ENCODE measurements at regions of chr10 and their contacts with region 1.

Region 1: DNA sequence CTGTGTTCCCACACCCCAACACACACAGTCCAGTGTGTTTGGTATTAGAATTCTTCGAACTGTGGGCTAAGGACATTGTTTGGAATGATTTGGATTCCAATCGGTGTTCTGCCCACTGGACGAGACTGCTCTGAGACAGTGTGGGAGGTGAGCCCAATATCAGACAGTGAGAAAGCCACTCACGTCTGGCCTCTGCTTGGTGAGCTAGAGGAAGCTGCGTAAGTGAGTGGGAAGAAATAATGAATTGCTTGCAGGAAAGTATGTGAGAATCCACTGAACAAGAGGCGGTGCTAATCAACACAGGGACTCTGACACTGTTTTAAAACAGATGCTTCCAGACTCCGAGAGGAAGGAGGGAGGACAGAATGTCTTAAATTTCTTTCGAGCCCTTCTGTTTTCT is 675.0 kb upstream of the ANKRD30A start:
- DNase-seq: no peak
- ATAC-seq: no peak
- H3K4me3 ChIP-seq: peak overlapping the region in 1 of 2 experiments; percentile 16; a peak in 1 of 4 replicates
- H3K27ac ChIP-seq: no peak overlapping the region
- H3K4me1 ChIP-seq: no peaks in the 10 kb centered on the region; the same call in 1 of the 2 replicates
- H3K27me3 ChIP-seq: no peaks in the 10 kb centered on the region
- CTCF ChIP-seq: no peak

Region 2: GRCh38 chr10:36437367-36437766 is 13.0 kb before region 1 on chr10:
- CTCF ChIA-PET with region 1: no interaction called
- POLR2A ChIA-PET with region 1: no interaction called
- in situ Hi-C with region 1: no loop called
- intact Hi-C with region 1: no loop called
- DNase-seq: no peak
- ATAC-seq: no peak
- H3K4me3 ChIP-seq: no peak overlapping the region
- H3K27ac ChIP-seq: no peak overlapping the region
- H3K4me1 ChIP-seq: no peaks in the 10 kb centered on the region
- H3K27me3 ChIP-seq: no peaks in the 10 kb centered on the region
- CTCF ChIP-seq: no peak

Region 3: GRCh38 chr10:36640626-36641025 is 190.2 kb after region 1 on chr10:
- CTCF ChIA-PET with region 1: no interaction called
- POLR2A ChIA-PET with region 1: interaction called, 10 read pairs
- in situ Hi-C with region 1: no loop called
- intact Hi-C with region 1: no loop called
- DNase-seq: no peak
- ATAC-seq: no peak
- H3K4me3 ChIP-seq: no peak overlapping the region
- H3K27ac ChIP-seq: no peak overlapping the region
- H3K4me1 ChIP-seq: no peaks in the 10 kb centered on the region
- H3K27me3 ChIP-seq: no peaks in the 10 kb centered on the region
- CTCF ChIP-seq: no peak

Region 4: GRCh38 chr10:36703179-36703578 is 252.8 kb after region 1 on chr10:
- CTCF ChIA-PET with region 1: no interaction called
- POLR2A ChIA-PET with region 1: no interaction called
- in situ Hi-C with region 1: no loop called
- intact Hi-C with region 1: no loop called
- DNase-seq: no peak
- ATAC-seq: no peak
- H3K4me3 ChIP-seq: no peak overlapping the region
- H3K27ac ChIP-seq: no peak overlapping the region
- H3K4me1 ChIP-seq: no peaks in the 10 kb centered on the region
- H3K27me3 ChIP-seq: no peaks in the 10 kb centered on the region
- CTCF ChIP-seq: no peak

Region 5: GRCh38 chr10:36837416-36837815 is 387.0 kb after region 1 on chr10:
- CTCF ChIA-PET with region 1: no interaction called
- POLR2A ChIA-PET with region 1: interaction called, 13 read pairs
- in situ Hi-C with region 1: no loop called
- intact Hi-C with region 1: no loop called
- DNase-seq: no peak
- ATAC-seq: no peak
- H3K4me3 ChIP-seq: no peak overlapping the region
- H3K27ac ChIP-seq: no peak overlapping the region
- H3K4me1 ChIP-seq: no peaks in the 10 kb centered on the region
- H3K27me3 ChIP-seq: no peaks in the 10 kb centered on the region
- CTCF ChIP-seq: no peak